Left cardiac atrium (tissue), 4 donors: ENCODE measurements at regions of chr20 and their contacts with region 1.

Region 1: GRCh38 chr20:42024634-42025033 is 406.5 kb upstream of the CHD6 start:
- DNase-seq: no peak
- ATAC-seq: no peak

Region 2: DNA sequence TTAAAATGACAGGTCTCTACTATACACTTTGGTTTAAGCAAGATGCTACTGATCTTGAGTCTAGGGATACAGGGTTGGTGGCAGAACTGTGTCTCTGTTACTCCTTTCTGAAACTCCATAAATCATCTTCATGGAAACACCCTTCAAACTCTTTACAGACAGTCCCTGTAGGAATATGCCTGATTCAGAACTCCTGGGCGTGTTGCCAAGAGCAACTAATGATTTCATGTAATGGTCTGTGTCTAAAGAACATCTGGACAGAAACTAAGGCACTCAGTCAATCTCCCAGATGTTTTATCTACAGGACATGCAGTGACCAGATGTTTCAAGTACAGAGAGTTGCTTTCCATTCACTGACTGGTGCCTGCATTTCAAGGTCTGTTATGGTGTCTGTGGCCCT is 58.0 kb after region 1 on chr20:
- intact Hi-C with region 1: loop called in 1 of 2 experiments (anchors 10 kb)
- DNase-seq: peak; percentile 79
- ATAC-seq: peak in 1 of 2 donors; percentile 93